ENCODE measurements at regions of chr15 and their contacts with region 1.

Region 1: DNA sequence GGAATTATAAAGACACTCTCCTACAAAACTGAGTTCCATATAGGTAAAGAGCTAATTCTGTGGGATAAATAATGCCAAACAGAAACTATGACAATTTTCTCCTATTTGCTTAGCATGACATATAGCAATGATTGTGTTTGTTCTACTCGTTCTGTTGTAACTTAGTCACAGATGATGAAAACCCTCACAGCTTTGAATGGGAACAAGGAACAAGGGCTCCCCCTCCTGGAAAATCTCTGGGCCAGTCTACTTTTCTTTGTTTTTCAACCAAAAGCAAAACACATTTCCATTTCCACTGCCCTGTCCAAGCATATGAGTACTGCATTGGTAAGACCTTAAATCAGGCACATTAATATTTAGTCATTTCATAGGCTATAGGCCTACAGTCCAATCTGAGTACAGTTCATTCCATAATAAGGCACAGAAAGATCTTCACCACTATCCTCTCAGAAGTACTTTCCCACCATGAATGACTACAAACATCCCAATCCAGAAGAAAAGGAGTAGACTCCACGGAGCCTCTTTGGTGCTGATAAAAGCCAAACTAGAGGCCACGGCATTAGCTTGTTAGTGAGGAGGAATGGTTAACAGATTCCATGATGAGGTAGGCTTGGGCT is 67.1 kb downstream of the ATP8B4 start:
- DNase-seq: peak; percentile 45 to 71
- H3K4me3 ChIP-seq: no peak overlapping the region
- H3K4me3 Mint-ChIP-seq: no peak overlapping the region
- H3K27ac Mint-ChIP-seq: no peak overlapping the region
- H3K4me1 ChIP-seq: no peaks in the 10 kb centered on the region
- H3K4me1 Mint-ChIP-seq: no peaks in the 10 kb centered on the region
- H3K27me3 ChIP-seq: no peaks in the 10 kb centered on the region
- H3K27me3 Mint-ChIP-seq: no peaks in the 10 kb centered on the region
- CTCF ChIP-seq: peak; percentile 61 to 65

Region 2: DNA sequence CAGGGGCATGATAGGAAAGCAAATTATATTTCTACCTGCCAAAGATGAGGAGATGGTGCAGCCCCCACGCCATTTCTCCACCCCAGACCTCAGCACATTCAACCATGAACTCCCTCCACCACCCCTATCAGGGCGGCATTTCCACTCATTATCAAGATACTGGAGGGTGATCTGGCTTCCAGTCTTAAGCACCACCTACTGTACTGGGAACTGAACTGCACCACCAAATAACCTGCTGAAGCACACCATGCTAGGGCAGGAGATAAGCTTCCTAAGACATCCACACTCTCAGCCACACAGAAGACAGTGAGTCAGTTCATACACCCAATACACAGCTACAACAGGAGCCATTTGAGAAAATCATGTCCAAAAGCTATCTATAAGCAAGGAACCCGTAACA is 530.1 kb before region 1 on chr15:
- CTCF ChIA-PET with region 1: no interaction called
- POLR2A ChIA-PET with region 1: no interaction called
- intact Hi-C with region 1: no loop called
- DNase-seq: peak in 1 of 2 experiments; percentile 11
- H3K4me3 ChIP-seq: no peak overlapping the region
- H3K4me3 Mint-ChIP-seq: no peak overlapping the region
- H3K27ac Mint-ChIP-seq: no peak overlapping the region
- H3K4me1 ChIP-seq: no peaks in the 10 kb centered on the region
- H3K4me1 Mint-ChIP-seq: no peaks in the 10 kb centered on the region
- H3K27me3 ChIP-seq: no peaks in the 10 kb centered on the region
- H3K27me3 Mint-ChIP-seq: peaks cover 3% of the 10 kb centered on the region
- CTCF ChIP-seq: no peak

Region 3: GRCh38 chr15:49876401-49877038 is 175.4 kb before region 1 on chr15:
- CTCF ChIA-PET with region 1: interaction called, 5 read pairs
- POLR2A ChIA-PET with region 1: no interaction called
- intact Hi-C with region 1: loop called (anchors 2 kb)
- DNase-seq: peak in 1 of 2 experiments; percentile 32
- H3K4me3 ChIP-seq: no peak overlapping the region
- H3K4me3 Mint-ChIP-seq: no peak overlapping the region
- H3K27ac Mint-ChIP-seq: no peak overlapping the region
- H3K4me1 ChIP-seq: no peaks in the 10 kb centered on the region
- H3K4me1 Mint-ChIP-seq: peaks cover 7% of the 10 kb centered on the region
- H3K27me3 ChIP-seq: no peaks in the 10 kb centered on the region
- H3K27me3 Mint-ChIP-seq: peaks cover 6% of the 10 kb centered on the region
- CTCF ChIP-seq: peak; percentile 36 to 40

Region 4: GRCh38 chr15:49934488-49934887 is 117.4 kb before region 1 on chr15:
- CTCF ChIA-PET with region 1: no interaction called
- POLR2A ChIA-PET with region 1: no interaction called
- intact Hi-C with region 1: no loop called
- DNase-seq: no peak
- H3K4me3 ChIP-seq: no peak overlapping the region
- H3K4me3 Mint-ChIP-seq: no peak overlapping the region
- H3K27ac Mint-ChIP-seq: no peak overlapping the region
- H3K4me1 ChIP-seq: no peaks in the 10 kb centered on the region
- H3K4me1 Mint-ChIP-seq: no peaks in the 10 kb centered on the region
- H3K27me3 ChIP-seq: no peaks in the 10 kb centered on the region
- H3K27me3 Mint-ChIP-seq: peaks cover 9% of the 10 kb centered on the region
- CTCF ChIP-seq: no peak

Measured in Caco-2 (cell line).